IMR-90 (cell line): ENCODE measurements at regions of chr1 and their contacts with region 1.

Region 1: GRCh38 chr1:19715334-19716203 is 50.9 kb downstream of the HTR6 start:
- DNase-seq: peak; percentile 93
- ATAC-seq: peak; percentile 100
- H3K4me3 ChIP-seq: no peak overlapping the region
- H3K27ac ChIP-seq: no peak overlapping the region
- H3K4me1 ChIP-seq: no peaks in the 10 kb centered on the region
- H3K27me3 ChIP-seq: no peaks in the 10 kb centered on the region
- CTCF ChIP-seq: peak; percentile 95
- POLR2A ChIP-seq: no peak
- RAD21 ChIP-seq: peak; percentile 81

Region 2: GRCh38 chr1:19477284-19478249 is 238.0 kb before region 1 on chr1:
- CTCF ChIA-PET with region 1: no interaction called
- POLR2A ChIA-PET with region 1: no interaction called
- dilution Hi-C with region 1: no loop called
- in situ Hi-C with region 1: no loop called
- intact Hi-C with region 1: no loop called
- DNase-seq: no peak
- ATAC-seq: peak; percentile 5; the same call in 1 of the 2 replicates
- H3K4me3 ChIP-seq: no peak overlapping the region
- H3K27ac ChIP-seq: no peak overlapping the region
- H3K4me1 ChIP-seq: peaks cover 32% of the 10 kb centered on the region
- H3K27me3 ChIP-seq: no peaks in the 10 kb centered on the region
- CTCF ChIP-seq: no peak
- POLR2A ChIP-seq: no peak
- RAD21 ChIP-seq: no peak

Region 3: DNA sequence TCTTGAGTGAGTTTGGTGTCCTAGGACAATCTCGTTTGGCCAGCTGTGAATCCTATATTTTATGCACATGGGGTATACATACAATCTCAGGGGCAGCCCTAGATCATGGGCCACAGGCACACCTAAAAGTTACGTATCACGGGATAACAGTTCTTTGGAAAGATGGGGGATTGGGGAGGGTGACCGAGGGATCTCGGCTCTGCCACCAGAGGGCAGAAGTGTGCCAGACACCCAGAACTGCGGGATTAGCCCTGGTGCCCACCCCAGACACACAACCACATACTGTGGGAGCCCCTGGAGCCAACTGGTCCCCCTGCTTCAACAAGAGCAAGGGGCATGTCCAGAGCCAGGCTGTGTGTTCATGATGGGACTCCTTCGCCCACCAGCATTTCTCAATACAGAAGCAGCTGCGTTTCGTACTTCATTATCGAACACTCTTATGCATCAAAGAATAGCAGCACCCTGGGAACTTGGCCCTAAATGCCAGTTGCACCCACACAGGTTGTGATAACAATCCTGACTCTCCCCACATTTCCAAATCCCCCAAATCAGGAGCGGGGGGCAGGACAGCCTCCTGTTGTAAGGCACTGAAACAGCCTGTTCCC is 46.7 kb after region 1 on chr1:
- CTCF ChIA-PET with region 1: interaction called, 6 read pairs
- POLR2A ChIA-PET with region 1: no interaction called
- dilution Hi-C with region 1: no loop called
- in situ Hi-C with region 1: no loop called
- intact Hi-C with region 1: loop called (anchors 2 kb)
- DNase-seq: peak; percentile 23
- ATAC-seq: peak; percentile 24
- H3K4me3 ChIP-seq: no peak overlapping the region
- H3K27ac ChIP-seq: no peak overlapping the region
- H3K4me1 ChIP-seq: peaks cover 16% of the 10 kb centered on the region
- H3K27me3 ChIP-seq: no peaks in the 10 kb centered on the region
- CTCF ChIP-seq: peak; percentile 71
- POLR2A ChIP-seq: no peak
- RAD21 ChIP-seq: peak; percentile 61

Region 4: DNA sequence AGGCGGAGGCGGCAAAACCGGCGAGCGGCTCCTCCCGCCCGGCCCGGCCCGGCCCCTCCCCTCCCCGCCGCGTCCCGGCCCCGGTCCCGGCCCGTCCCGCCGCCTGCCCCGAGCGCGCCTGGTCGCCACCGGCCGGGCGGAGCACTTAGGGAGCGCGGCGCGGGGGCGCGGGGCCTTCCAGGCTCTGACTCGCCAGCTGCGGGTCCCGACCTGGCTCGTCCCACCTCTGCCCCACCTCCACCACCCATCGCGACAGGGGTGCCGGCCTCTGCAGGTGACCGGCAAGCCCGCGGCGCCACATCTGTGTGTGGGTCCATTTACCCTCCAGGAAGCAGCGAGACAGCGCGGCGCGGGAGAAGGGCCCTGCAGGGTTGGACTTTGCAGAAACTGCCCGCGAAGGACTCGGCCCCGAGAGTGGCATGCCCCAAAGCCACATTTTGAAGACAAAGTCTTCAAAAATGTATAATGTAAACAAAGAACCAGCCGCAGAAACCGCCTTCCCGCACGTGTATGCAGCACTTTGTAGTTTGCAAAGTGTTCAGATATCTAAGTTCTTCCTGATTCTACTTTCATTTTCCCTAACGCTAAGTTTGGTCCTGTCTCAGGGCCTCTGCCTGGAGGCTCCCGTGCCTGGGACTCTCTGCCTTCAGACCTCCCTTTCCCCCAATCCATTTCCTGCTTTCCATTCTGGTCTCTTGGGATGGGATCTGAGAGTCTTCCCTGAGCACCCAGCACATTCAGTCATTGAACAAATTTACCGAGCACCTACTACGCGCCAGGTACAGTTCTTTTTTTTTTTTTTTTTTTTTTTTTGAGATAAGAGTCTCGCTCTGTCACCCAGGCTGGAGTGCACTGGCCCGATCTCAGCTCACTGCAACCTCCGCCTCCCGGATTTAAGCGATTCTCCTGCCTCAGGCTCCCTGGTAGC is 84.6 kb after region 1 on chr1 and contains the start of gene TMCO4:
- CTCF ChIA-PET with region 1: no interaction called
- POLR2A ChIA-PET with region 1: no interaction called
- dilution Hi-C with region 1: no loop called
- in situ Hi-C with region 1: no loop called
- intact Hi-C with region 1: loop called (anchors 1 kb)
- DNase-seq: peak; percentile 88
- ATAC-seq: peak; percentile 81
- H3K4me3 ChIP-seq: peak within 1 kb of the TSS; percentile 60
- H3K27ac ChIP-seq: peak within 1 kb of the TSS; percentile 75
- H3K4me1 ChIP-seq: peaks cover 9% of the 10 kb centered on the region
- H3K27me3 ChIP-seq: peaks cover 9% of the 10 kb centered on the region
- CTCF ChIP-seq: no peak
- POLR2A ChIP-seq: no peak
- RAD21 ChIP-seq: no peak
- total RNA-seq, gene TMCO4: 6.9 and 7.3 TPM in 2 replicates

Region 5: GRCh38 chr1:19811206-19811851 is 95.8 kb after region 1 on chr1:
- CTCF ChIA-PET with region 1: interaction called, 3 read pairs
- POLR2A ChIA-PET with region 1: no interaction called
- dilution Hi-C with region 1: no loop called
- in situ Hi-C with region 1: no loop called
- intact Hi-C with region 1: loop called (anchors 1 kb)
- DNase-seq: peak; percentile 49
- ATAC-seq: peak; percentile 90
- H3K4me3 ChIP-seq: no peak overlapping the region
- H3K27ac ChIP-seq: no peak overlapping the region
- H3K4me1 ChIP-seq: no peaks in the 10 kb centered on the region
- H3K27me3 ChIP-seq: peaks cover 14% of the 10 kb centered on the region; the same call in 1 of the 2 replicates
- CTCF ChIP-seq: peak; percentile 70
- POLR2A ChIP-seq: no peak
- RAD21 ChIP-seq: peak; percentile 70

Region 6: GRCh38 chr1:19882111-19883071 is 166.8 kb after region 1 on chr1 and contains the start of gene OTUD3:
- CTCF ChIA-PET with region 1: no interaction called
- POLR2A ChIA-PET with region 1: no interaction called
- dilution Hi-C with region 1: no loop called
- in situ Hi-C with region 1: no loop called
- intact Hi-C with region 1: loop called (anchors 1 kb)
- DNase-seq: peak; percentile 97
- ATAC-seq: peak; percentile 95
- H3K4me3 ChIP-seq: peak within 1 kb of the TSS; percentile 92
- H3K27ac ChIP-seq: peak within 1 kb of the TSS; percentile 86
- H3K4me1 ChIP-seq: peaks cover 6% of the 10 kb centered on the region
- H3K27me3 ChIP-seq: no peaks in the 10 kb centered on the region; the same call in 1 of the 2 replicates
- CTCF ChIP-seq: peak; percentile 93
- POLR2A ChIP-seq: peak; percentile 83
- RAD21 ChIP-seq: peak; percentile 49
- total RNA-seq, gene OTUD3: 2.9 and 6.1 TPM in 2 replicates